IMR-90 (cell line): ENCODE measurements at regions of chr12 and their contacts with region 1.

Region 1: GRCh38 chr12:111006621-111007020 is 86.2 kb upstream of the MYL2 start:
- DNase-seq: no peak
- ATAC-seq: no peak
- H3K4me3 ChIP-seq: no peak overlapping the region
- H3K27ac ChIP-seq: no peak overlapping the region
- H3K4me1 ChIP-seq: no peaks in the 10 kb centered on the region
- H3K27me3 ChIP-seq: no peaks in the 10 kb centered on the region
- CTCF ChIP-seq: no peak
- POLR2A ChIP-seq: no peak
- RAD21 ChIP-seq: no peak

Region 2: GRCh38 chr12:110957652-110958051 is 49.0 kb before region 1 on chr12:
- CTCF ChIA-PET with region 1: no interaction called
- POLR2A ChIA-PET with region 1: no interaction called
- dilution Hi-C with region 1: no loop called
- in situ Hi-C with region 1: no loop called
- intact Hi-C with region 1: no loop called
- DNase-seq: no peak
- ATAC-seq: no peak
- H3K4me3 ChIP-seq: no peak overlapping the region
- H3K27ac ChIP-seq: no peak overlapping the region
- H3K4me1 ChIP-seq: no peaks in the 10 kb centered on the region
- H3K27me3 ChIP-seq: no peaks in the 10 kb centered on the region
- CTCF ChIP-seq: no peak
- POLR2A ChIP-seq: no peak
- RAD21 ChIP-seq: no peak

Region 3: GRCh38 chr12:111343181-111343580 is 336.6 kb after region 1 on chr12:
- CTCF ChIA-PET with region 1: no interaction called
- POLR2A ChIA-PET with region 1: interaction called, 14 read pairs
- dilution Hi-C with region 1: no loop called
- in situ Hi-C with region 1: no loop called
- intact Hi-C with region 1: no loop called
- DNase-seq: no peak
- ATAC-seq: no peak
- H3K4me3 ChIP-seq: no peak overlapping the region
- H3K27ac ChIP-seq: no peak overlapping the region
- H3K4me1 ChIP-seq: no peaks in the 10 kb centered on the region
- H3K27me3 ChIP-seq: peaks cover 8% of the 10 kb centered on the region
- CTCF ChIP-seq: no peak
- POLR2A ChIP-seq: no peak
- RAD21 ChIP-seq: no peak